Activated CD4-positive, alpha-beta T cell treated with anti-CD3 and anti-CD28 coated beads, Interleukin-2, amount 10 ng/mL, durations not matched to agents 24 days and 14 days (primary cell): ENCODE measurements at regions of chr1 and their contacts with region 1.

Region 1: GRCh38 chr1:84620720-84621313 is 46.6 kb upstream of the CTBS start:
- DNase-seq: peak; percentile 96
- H3K4me3 Mint-ChIP-seq: peak overlapping the region; percentile 91
- H3K27ac Mint-ChIP-seq: peak overlapping the region; percentile 92
- H3K4me1 Mint-ChIP-seq: peaks cover 18% of the 10 kb centered on the region
- H3K27me3 Mint-ChIP-seq: peaks cover 2% of the 10 kb centered on the region

Region 2: DNA sequence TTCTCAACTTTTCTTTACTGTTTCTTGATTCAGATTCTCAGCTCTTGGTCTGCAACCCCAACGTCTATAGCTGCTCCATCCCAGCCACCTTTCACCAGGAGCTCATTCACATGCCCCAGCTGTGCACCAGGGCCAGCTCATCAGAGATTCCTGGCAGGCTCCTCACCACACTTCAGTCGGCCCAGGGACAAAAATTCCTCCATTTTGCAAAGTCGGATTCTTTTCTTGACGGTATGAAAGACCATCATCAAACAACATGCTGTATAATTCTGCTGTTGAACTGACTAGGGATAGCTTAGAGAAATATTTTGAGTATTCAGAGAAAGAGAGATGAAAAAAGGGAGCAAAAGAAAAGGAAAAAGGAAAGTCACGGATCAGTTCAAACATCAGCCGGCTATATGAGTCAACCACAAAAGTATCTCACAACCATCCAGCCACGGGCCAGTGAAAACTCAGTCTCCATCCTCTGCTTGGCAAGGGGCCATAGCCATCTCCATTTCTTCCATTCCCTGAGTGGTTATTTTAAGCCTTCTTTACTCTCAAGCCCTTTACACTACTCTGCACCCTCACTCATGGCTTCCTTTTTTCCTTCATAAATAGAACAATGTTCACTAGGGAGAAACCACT is 208.4 kb before region 1 on chr1:
- intact Hi-C with region 1: no loop called
- DNase-seq: no peak
- H3K4me3 Mint-ChIP-seq: no peak overlapping the region
- H3K27ac Mint-ChIP-seq: no peak overlapping the region
- H3K4me1 Mint-ChIP-seq: no peaks in the 10 kb centered on the region
- H3K27me3 Mint-ChIP-seq: peaks cover 5% of the 10 kb centered on the region

Region 3: GRCh38 chr1:84442256-84442655 is 178.6 kb before region 1 on chr1:
- intact Hi-C with region 1: loop called (anchors 1 kb)
- DNase-seq: peak; percentile 80
- H3K4me3 Mint-ChIP-seq: peak overlapping the region; percentile 28
- H3K27ac Mint-ChIP-seq: peak overlapping the region; percentile 69
- H3K4me1 Mint-ChIP-seq: peaks cover 16% of the 10 kb centered on the region
- H3K27me3 Mint-ChIP-seq: peaks cover 15% of the 10 kb centered on the region

Region 4: DNA sequence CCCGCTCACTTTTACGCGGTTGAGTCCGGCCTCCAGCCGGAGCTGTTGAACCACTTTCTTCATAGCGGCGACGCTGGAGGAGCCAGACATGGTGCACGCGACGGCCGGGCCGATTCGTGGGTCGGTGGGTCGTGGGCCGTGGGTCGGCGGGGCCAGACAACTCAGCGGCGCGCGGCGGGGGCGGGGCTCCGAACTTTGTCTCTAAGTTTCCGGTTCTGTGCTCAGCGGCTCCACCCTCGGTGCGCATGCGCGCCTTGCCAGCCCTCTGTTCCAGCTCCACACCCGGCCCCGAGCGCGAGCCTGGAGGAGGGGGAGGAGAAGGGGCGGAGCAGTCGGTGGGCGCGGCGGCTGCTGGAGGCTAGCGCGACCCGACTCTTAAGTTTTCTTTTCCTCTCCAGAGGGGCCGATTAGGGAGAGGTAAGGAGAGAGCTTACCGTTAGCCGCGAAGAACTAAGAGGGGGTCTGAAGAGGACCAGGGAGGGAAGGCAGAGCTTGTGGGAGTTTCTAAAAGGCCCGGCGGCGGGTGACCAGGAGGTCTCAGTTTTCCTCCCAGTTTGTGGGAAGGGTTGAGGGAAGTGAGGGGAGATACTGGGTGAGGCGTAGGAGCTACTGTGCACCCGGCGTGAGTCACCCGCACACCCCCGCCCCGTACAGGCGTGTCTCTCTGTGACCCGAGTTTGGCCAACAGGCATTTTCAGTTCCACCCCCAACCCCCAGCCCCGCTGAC is 114.7 kb before region 1 on chr1 and contains the starts of genes GNG5 and SPATA1:
- intact Hi-C with region 1: loop called (anchors 1 kb)
- DNase-seq: peak; percentile 99
- H3K4me3 Mint-ChIP-seq: peak within 1 kb of the TSS; percentile 99
- H3K27ac Mint-ChIP-seq: peak within 1 kb of the TSS; percentile 99
- H3K4me1 Mint-ChIP-seq: peaks cover 41% of the 10 kb centered on the region
- H3K27me3 Mint-ChIP-seq: no peaks in the 10 kb centered on the region
- total RNA-seq, gene GNG5: 115 and 122 TPM in 2 replicates
- total RNA-seq, gene SPATA1: 0.69 and 0.98 TPM in 2 replicates

Region 5: GRCh38 chr1:84598846-84599741 is 21.7 kb before region 1 on chr1:
- intact Hi-C with region 1: loop called (anchors 1 kb)
- DNase-seq: no peak
- H3K4me3 Mint-ChIP-seq: peak overlapping the region; percentile 51
- H3K27ac Mint-ChIP-seq: peak overlapping the region; percentile 88
- H3K4me1 Mint-ChIP-seq: peaks cover 19% of the 10 kb centered on the region
- H3K27me3 Mint-ChIP-seq: peaks cover 4% of the 10 kb centered on the region

Region 6: GRCh38 chr1:84668185-84668584 is 47.4 kb after region 1 on chr1:
- intact Hi-C with region 1: no loop called
- DNase-seq: no peak
- H3K4me3 Mint-ChIP-seq: no peak overlapping the region
- H3K27ac Mint-ChIP-seq: no peak overlapping the region
- H3K4me1 Mint-ChIP-seq: peaks cover 6% of the 10 kb centered on the region
- H3K27me3 Mint-ChIP-seq: no peaks in the 10 kb centered on the region

Region 7: DNA sequence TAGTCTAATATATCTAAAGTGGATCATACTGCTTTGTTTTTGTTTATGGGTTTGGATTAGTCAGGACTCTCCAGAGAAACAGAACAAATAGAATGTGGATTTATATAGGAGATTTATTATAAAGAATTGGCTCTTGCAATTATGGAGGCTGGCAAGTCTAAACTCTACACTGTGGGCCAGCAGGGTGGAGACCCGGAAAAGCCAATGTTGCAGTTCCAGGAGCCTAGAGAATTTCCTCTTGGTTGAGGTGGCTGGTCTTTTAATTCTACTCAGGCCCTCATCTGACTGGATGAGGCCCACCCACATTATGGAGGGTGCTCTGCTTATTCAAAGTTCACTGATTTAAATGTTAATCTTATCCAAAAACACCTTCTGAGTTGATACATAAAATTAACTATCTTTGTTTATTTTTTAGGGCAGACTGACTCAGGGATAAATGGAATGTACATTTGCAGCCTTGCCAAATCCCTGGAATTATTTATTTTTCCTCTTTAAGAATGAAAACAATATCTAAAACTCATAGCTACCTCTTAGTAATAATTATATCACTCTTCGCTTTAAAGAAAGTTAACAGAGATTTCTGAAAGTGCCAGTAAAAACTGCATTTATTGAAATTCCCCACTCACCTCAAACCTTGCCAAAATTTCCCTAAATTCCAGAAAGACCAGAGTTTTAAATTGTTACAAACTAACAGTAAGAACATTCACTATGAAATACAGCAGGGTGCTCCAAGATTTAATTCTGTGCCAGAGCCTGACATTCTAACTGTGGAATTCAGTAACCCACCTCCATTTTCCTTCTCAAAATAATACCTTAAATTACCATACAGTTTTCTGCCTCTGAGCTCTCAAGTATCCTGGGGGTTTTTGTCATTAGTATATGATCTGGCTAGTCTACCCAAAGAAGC is 106.0 kb after region 1 on chr1:
- intact Hi-C with region 1: no loop called
- DNase-seq: no peak
- H3K4me3 Mint-ChIP-seq: no peak overlapping the region
- H3K27ac Mint-ChIP-seq: no peak overlapping the region
- H3K4me1 Mint-ChIP-seq: no peaks in the 10 kb centered on the region
- H3K27me3 Mint-ChIP-seq: peaks cover 41% of the 10 kb centered on the region

Region 8: DNA sequence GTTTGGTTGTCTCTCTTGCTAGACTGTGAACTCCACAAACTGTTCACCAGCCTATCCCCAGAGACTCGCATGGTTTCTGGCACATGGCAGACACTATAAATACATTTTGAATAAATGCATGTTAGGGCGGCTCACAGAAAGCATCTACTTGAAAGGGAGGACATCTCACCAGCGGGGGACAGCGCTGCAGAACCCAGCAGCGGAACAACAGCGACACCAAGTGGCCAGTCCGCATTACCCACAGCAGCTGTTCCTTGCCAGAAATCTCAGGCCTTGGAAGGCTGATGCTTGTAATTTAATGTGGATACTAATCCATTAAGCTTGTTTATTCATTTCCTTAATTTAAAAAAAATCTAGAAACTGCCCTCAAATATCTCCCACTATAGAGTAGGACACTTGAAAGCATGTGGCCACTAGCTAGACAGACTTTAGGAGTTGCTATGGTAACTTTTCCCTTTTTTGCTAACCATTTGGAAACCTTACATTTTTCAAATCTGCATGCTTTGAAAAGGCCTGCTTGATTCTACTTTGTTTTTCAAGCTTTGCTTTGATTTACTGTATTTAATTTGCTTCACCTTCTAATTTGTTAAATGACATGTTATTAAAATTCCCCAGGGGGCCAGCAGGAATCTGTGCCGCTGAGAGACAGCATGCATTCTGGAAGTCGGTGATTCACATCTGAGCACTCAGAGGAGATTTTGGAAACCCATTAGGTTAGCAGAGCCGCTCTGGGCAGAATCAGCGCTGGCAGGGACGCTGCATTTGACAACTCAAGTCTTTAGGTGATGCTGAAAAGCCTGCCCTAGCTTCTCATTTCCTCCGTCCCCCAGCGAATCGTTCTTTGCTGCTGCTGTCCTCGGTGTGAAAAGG is 132.9 kb after region 1 on chr1:
- intact Hi-C with region 1: loop called (anchors 1 kb)
- DNase-seq: peak; percentile 92
- H3K4me3 Mint-ChIP-seq: no peak overlapping the region
- H3K27ac Mint-ChIP-seq: no peak overlapping the region
- H3K4me1 Mint-ChIP-seq: peaks cover 3% of the 10 kb centered on the region
- H3K27me3 Mint-ChIP-seq: peaks cover 31% of the 10 kb centered on the region

Region 9: GRCh38 chr1:84781946-84782771 is 161.3 kb after region 1 on chr1:
- intact Hi-C with region 1: no loop called
- DNase-seq: peak; percentile 93
- H3K4me3 Mint-ChIP-seq: peak overlapping the region; percentile 75
- H3K27ac Mint-ChIP-seq: no peak overlapping the region
- H3K4me1 Mint-ChIP-seq: peaks cover 22% of the 10 kb centered on the region
- H3K27me3 Mint-ChIP-seq: peaks cover 8% of the 10 kb centered on the region